Ascending aorta (tissue), 2 donors: ENCODE measurements at regions of chr14 and their contacts with region 1.

Region 1: GRCh38 chr14:89954070-89955028 is at the start of gene EFCAB11:
- DNase-seq: peak; percentile 87 to 98
- H3K4me3 ChIP-seq: peak within 1 kb of the TSS; percentile 82 to 83
- H3K27ac ChIP-seq: peak within 1 kb of the TSS; percentile 91 to 94
- H3K4me1 ChIP-seq: peaks cover 4 to 11% of the 10 kb centered on the region in 2 donors
- H3K27me3 ChIP-seq: no peaks in the 10 kb centered on the region
- CTCF ChIP-seq: no peak
- total RNA-seq, gene EFCAB11: not detected

Region 2: GRCh38 chr14:88824314-88825077 is 1129.9 kb before region 1 on chr14 and contains the start of gene TTC8:
- intact Hi-C with region 1: loop called (anchors 2 kb)
- DNase-seq: peak; percentile 42 to 91
- H3K4me3 ChIP-seq: peak within 1 kb of the TSS; percentile 71 to 78
- H3K27ac ChIP-seq: peak within 1 kb of the TSS; percentile 72
- H3K4me1 ChIP-seq: peaks cover 0 to 1% of the 10 kb centered on the region in 2 donors
- H3K27me3 ChIP-seq: no peaks in the 10 kb centered on the region
- CTCF ChIP-seq: no peak
- total RNA-seq, gene TTC8: 24.4 TPM

Region 3: DNA sequence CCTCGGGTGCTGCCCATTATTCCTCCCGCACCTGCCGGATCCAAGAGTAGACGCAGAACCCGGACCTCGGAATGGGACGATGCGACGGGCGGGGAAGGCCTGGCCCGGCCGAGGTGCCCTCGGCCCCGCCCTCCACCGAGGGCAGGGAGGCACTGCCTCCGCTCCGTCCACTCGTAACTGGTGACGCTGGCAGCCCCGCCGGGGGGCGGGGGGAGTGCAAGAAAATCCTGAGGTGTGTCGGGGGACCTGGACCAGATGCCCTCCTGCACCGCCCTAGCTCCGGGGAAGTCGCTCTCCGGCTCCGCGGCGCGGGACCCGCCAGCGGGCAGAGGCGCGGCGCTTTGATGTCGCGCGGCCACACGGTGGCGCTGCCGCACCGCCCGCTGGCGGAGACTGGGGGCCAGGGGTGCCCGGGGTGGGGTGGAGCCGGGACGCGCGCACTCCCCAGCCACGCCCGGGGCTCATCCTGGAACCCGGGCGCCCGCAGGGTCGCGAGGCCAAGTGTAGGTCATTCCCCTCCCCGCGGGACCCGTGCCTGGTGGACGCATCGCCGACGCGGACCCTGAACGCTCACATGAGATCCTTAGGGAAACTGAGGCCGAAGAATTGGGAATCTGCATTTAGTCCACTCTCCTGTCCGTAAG is 927.1 kb before region 1 on chr14:
- intact Hi-C with region 1: loop called (anchors 5 kb)
- DNase-seq: peak; percentile 39 to 73
- H3K4me3 ChIP-seq: peak overlapping the region; percentile 56 to 78
- H3K27ac ChIP-seq: no peak overlapping the region
- H3K4me1 ChIP-seq: peaks cover 0 to 3% of the 10 kb centered on the region in 2 donors
- H3K27me3 ChIP-seq: peaks cover 2% of the 10 kb centered on the region
- CTCF ChIP-seq: peak; percentile 64 to 96 (median 89)

Region 4: GRCh38 chr14:90060312-90060964 is 106.1 kb after region 1 on chr14:
- intact Hi-C with region 1: no loop called
- DNase-seq: no peak
- H3K4me3 ChIP-seq: peak overlapping the region; percentile 48 to 61
- H3K27ac ChIP-seq: no peak overlapping the region
- H3K4me1 ChIP-seq: peaks cover 16 to 19% of the 10 kb centered on the region in 2 donors
- H3K27me3 ChIP-seq: peaks cover 17% of the 10 kb centered on the region
- CTCF ChIP-seq: peak in 2 of 3 experiments; percentile 12 to 35

Region 5: GRCh38 chr14:90256354-90257131 is 302.2 kb after region 1 on chr14 and contains the start of gene PSMC1:
- intact Hi-C with region 1: loop called (anchors 10 kb)
- DNase-seq: peak; percentile 63 to 95
- H3K4me3 ChIP-seq: peak within 1 kb of the TSS; percentile 92 to 99
- H3K27ac ChIP-seq: peak within 1 kb of the TSS; percentile 90 to 93
- H3K4me1 ChIP-seq: peaks cover 0 to 4% of the 10 kb centered on the region in 2 donors
- H3K27me3 ChIP-seq: no peaks in the 10 kb centered on the region
- CTCF ChIP-seq: peak in 1 of 3 experiments; percentile 2
- total RNA-seq, gene PSMC1: 93.2 TPM